Activated CD4-positive, alpha-beta memory T cell treated with anti-CD3 and anti-CD28 coated beads, Interleukin-2, amount 10 ng/mL, durations not matched to agents 7 days and 5 days (primary cell): ENCODE measurements at regions of chr17 and their contacts with region 1.

Region 1: GRCh38 chr17:49763735-49764558 is at the start of gene FAM117A:
- DNase-seq: peak; percentile 99
- H3K4me3 Mint-ChIP-seq: peak within 1 kb of the TSS; percentile 93
- H3K27ac Mint-ChIP-seq: peak within 1 kb of the TSS; percentile 78
- H3K4me1 Mint-ChIP-seq: peaks cover 54% of the 10 kb centered on the region
- H3K27me3 Mint-ChIP-seq: peaks cover 31% of the 10 kb centered on the region
- total RNA-seq, gene FAM117A: 61.0 to 62.0 TPM

Region 2: DNA sequence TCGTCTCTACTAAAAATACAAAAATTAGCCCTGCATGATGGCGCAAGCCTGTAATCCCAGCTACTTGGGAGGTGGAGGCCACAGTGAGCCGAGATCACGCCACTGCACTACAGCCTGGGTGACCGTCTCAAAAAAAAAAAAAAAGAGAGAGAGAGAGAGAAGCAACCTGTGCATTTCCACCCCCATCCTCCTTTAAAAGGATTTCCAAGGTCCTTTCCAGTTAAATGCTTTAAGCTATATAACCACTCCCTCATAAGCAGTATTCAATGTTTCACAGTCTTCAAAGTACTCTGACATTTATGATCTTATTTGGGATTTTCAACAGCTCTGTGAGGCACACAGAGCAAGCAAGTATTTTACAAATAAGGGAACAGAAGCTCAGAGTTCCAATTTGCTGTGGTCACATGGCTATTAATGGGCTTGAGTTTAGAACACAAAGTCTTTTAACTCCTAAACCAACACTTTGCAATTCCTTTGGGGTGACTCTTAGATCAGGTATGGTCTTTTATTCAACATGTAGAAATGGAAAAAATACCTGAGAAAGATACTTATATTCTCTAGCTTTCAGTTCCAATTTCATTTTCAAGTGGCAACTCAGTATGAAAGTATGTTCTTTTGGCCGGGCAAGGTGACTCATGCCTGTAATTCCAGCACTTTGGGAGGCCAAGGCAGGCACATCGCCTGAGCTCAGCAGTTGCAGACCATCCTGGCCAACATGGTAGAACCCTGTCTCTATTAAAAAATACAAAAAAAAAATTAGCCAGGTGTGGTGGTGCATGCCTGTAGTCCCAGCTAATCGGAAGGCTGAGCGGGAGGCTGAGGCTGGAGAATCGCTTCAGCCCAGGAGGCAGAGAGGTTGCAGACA is 117.3 kb before region 1 on chr17:
- CTCF ChIA-PET with region 1: no interaction called
- POLR2A ChIA-PET with region 1: no interaction called
- DNase-seq: peak; percentile 38
- H3K4me3 Mint-ChIP-seq: no peak overlapping the region
- H3K27ac Mint-ChIP-seq: peak overlapping the region; percentile 2
- H3K4me1 Mint-ChIP-seq: peaks cover 29% of the 10 kb centered on the region
- H3K27me3 Mint-ChIP-seq: no peaks in the 10 kb centered on the region

Region 3: DNA sequence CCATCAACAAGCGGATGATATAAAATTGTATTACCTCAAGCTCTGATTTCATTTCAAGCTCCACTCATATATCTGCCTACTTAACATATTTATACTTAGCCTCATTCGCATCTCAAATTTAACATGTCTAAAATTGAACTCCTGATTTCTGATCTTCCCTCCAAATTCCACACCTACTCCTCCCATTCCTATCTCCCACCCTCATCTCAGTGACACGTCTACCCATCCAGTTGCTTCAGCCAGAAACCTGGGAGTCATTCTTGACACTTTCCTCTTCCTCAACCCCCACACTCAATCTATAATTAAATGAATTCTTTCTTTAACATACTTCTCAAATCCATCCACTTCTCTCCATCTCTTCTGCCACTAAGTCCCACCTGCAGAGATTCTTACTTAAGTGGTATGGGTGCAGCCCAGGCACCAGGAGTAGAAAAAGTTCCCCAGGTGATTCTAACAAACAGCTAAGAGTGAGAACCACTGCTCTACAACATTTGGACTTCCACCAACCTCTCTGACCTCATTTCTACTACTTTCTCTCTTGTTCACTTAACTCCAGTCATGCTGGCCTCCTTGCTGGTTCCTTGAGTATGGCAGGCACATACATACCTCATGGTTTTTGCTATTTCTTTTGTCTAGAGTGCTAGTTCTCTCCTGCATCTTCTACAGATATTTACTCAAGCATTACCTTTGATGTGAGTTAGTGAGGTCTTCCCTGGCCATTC is 104.1 kb before region 1 on chr17:
- CTCF ChIA-PET with region 1: no interaction called
- POLR2A ChIA-PET with region 1: no interaction called
- DNase-seq: no peak
- H3K4me3 Mint-ChIP-seq: no peak overlapping the region
- H3K27ac Mint-ChIP-seq: no peak overlapping the region
- H3K4me1 Mint-ChIP-seq: peaks cover 22% of the 10 kb centered on the region
- H3K27me3 Mint-ChIP-seq: no peaks in the 10 kb centered on the region

Region 4: GRCh38 chr17:49715717-49716279 is 48.1 kb before region 1 on chr17:
- CTCF ChIA-PET with region 1: interaction called, 38 read pairs
- POLR2A ChIA-PET with region 1: interaction called, 59 read pairs
- DNase-seq: peak; percentile 49
- H3K4me3 Mint-ChIP-seq: peak overlapping the region; percentile 26
- H3K27ac Mint-ChIP-seq: peak overlapping the region; percentile 90
- H3K4me1 Mint-ChIP-seq: peaks cover 53% of the 10 kb centered on the region
- H3K27me3 Mint-ChIP-seq: no peaks in the 10 kb centered on the region

Region 5: DNA sequence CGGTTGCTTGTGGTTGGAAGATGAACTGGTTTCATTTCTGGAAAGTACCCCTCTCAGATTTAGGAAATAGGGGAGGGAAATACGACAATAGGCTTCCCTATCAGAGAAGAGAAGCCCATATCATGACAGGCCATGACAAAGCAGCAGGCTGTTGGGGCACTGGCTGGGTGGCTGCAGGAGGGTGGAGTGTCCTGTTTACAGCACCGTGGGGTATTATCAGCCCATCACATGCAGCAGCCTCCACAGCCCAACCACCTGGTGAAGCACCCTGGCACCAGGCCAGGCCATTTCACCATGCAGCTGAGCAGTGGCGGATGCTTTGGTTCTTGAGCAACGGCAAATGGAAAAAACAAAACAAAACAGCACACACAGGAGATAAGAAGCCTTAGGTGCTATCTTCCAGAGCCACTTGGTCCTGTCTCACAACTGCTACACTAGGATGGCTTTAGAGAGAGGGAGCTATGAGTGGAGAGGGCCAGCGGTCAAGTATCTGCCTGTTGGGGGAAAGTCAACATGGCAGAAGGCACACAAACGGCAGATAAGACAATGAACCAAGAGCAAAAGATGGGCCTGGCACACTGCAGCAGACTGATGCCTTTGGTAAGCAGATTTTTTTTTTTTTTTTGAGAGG is 24.2 kb before region 1 on chr17:
- CTCF ChIA-PET with region 1: interaction called, 7 read pairs
- POLR2A ChIA-PET with region 1: interaction called, 196 read pairs
- DNase-seq: peak; percentile 95
- H3K4me3 Mint-ChIP-seq: peak overlapping the region; percentile 94
- H3K27ac Mint-ChIP-seq: peak overlapping the region; percentile 100
- H3K4me1 Mint-ChIP-seq: peaks cover 77% of the 10 kb centered on the region
- H3K27me3 Mint-ChIP-seq: no peaks in the 10 kb centered on the region

Region 6: GRCh38 chr17:49748791-49749190 is 15.2 kb before region 1 on chr17:
- CTCF ChIA-PET with region 1: interaction called, 22 read pairs
- POLR2A ChIA-PET with region 1: interaction called, 196 read pairs
- DNase-seq: peak; percentile 74
- H3K4me3 Mint-ChIP-seq: peak overlapping the region; percentile 51
- H3K27ac Mint-ChIP-seq: peak overlapping the region; percentile 94
- H3K4me1 Mint-ChIP-seq: peaks cover 82% of the 10 kb centered on the region
- H3K27me3 Mint-ChIP-seq: no peaks in the 10 kb centered on the region

Region 7: DNA sequence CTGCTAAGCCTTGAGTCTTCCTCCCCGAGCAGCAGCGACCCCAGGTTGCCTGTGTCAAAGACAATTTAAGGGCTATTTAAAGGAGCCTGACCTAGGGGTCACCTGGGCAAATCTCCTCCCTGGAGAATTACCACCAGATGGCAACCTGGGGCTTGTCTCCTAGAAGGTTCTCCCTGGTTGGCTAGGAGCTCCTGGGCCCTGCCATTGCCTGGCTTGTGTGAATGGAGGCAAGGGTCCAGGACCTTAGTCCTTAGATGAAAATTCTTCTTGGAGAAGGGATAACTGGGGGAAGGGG is 135.2 kb after region 1 on chr17:
- CTCF ChIA-PET with region 1: no interaction called
- POLR2A ChIA-PET with region 1: no interaction called
- DNase-seq: no peak
- H3K4me3 Mint-ChIP-seq: no peak overlapping the region
- H3K27ac Mint-ChIP-seq: no peak overlapping the region
- H3K4me1 Mint-ChIP-seq: no peaks in the 10 kb centered on the region
- H3K27me3 Mint-ChIP-seq: peaks cover 54% of the 10 kb centered on the region